ENCODE measurements at regions of chr15 and their contacts with region 1.

Region 1: DNA sequence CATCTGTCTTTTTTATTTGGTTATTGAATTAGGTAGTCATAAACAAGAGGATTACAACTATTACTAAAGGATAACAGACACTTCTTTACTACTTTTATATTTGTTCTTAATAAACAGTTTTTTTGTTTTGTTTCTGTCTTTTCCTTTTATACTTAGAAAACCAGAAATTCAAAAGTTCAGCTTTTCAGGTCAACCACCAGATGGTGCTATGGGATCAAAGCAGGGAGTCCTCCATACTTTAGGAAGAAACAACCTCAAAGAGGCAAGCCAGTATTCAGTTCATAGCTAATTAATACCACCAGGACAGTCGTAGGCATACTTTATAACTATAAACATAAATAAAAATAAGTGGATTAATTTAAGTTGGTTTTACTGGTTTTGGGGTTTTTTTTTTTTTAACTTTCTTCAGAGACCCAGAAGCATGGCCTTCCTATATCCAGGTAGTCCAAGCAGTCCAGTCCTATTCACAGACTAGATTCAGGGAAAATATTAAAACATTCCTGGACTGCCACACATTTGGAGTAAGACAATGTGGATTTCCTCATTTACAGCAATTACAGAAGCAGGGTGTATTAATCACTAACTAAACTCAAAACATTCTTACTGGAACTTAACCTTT is 16.0 kb upstream of the EID1 start:
- DNase-seq: peak; percentile 58
- H3K4me3 ChIP-seq: no peak overlapping the region
- H3K27ac ChIP-seq: no peak overlapping the region
- H3K4me1 ChIP-seq: no peaks in the 10 kb centered on the region
- H3K27me3 ChIP-seq: no peaks in the 10 kb centered on the region
- CTCF ChIP-seq: peak; percentile 51 to 57
- POLR2A ChIP-seq: no peak

Region 2: GRCh38 chr15:48352474-48353072 is 509.3 kb before region 1 on chr15:
- CTCF ChIA-PET with region 1: interaction called, 69 read pairs
- POLR2A ChIA-PET with region 1: no interaction called
- dilution Hi-C with region 1: no loop called
- intact Hi-C with region 1: no loop called
- DNase-seq: peak; percentile 67
- H3K4me3 ChIP-seq: no peak overlapping the region
- H3K27ac ChIP-seq: no peak overlapping the region
- H3K4me1 ChIP-seq: no peaks in the 10 kb centered on the region
- H3K27me3 ChIP-seq: no peaks in the 10 kb centered on the region
- CTCF ChIP-seq: peak; percentile 68 to 69
- POLR2A ChIP-seq: no peak

Region 3: DNA sequence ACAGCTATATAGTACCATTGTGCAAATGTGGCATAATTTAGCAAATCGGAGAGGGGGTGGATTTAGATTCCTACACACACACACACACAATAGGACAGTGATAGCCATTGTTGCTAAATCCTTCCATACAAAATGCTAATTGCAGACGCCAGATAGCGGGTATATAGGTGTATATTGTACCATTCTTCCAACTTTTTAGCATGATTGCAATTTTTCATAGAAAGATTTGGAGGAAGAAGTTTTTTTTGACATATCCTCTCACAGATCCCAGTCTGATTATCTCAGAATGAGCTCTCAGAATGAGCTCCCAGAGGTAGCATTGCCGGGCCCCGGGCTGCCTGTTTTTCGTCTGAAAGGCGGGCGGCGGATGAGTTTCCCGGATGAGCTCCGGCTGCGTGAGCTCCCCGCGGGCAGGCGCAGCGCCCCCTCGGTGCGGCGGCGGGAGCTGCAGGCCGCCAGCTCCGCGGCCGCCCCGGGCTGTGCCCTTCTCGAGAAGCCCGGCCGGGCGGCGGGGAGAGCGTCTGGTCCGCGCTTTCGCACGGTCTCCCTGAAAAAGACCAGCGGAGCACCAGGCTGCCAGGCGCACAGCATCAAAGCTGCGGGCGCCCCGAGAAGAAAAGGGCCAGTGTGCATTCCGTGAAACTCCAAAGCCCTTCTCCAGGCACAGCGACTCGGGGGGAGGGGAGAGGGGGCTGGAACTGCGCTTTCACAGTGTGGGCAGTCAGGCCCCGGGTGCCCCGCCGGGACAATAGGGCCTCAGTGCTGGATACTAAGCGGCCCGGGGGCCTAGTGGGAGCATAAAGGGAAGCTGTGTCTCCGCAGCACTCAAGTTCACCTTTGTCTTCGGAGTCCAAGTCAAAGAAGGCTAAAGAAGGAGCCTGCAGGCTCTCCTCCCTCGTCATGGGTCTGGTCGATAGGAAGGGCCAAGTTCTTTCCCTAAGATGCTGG is 113.8 kb after region 1 on chr15:
- CTCF ChIA-PET with region 1: interaction called, 66 read pairs
- POLR2A ChIA-PET with region 1: no interaction called
- dilution Hi-C with region 1: no loop called
- intact Hi-C with region 1: loop called (anchors 1 kb)
- DNase-seq: peak; percentile 79
- H3K4me3 ChIP-seq: peak overlapping the region; percentile 34 to 61 (median 58)
- H3K27ac ChIP-seq: no peak overlapping the region
- H3K4me1 ChIP-seq: peaks cover 8% of the 10 kb centered on the region
- H3K27me3 ChIP-seq: no peaks in the 10 kb centered on the region
- CTCF ChIP-seq: peak; percentile 81 to 98
- POLR2A ChIP-seq: no peak

Region 4: GRCh38 chr15:49155110-49155833 is 293.4 kb after region 1 on chr15 and contains the start of gene COPS2:
- CTCF ChIA-PET with region 1: interaction called, 17 read pairs
- POLR2A ChIA-PET with region 1: no interaction called
- dilution Hi-C with region 1: no loop called
- intact Hi-C with region 1: no loop called
- DNase-seq: peak; percentile 99
- H3K4me3 ChIP-seq: peak within 1 kb of the TSS; percentile 82 to 96 (median 83)
- H3K27ac ChIP-seq: peak within 1 kb of the TSS; percentile 62
- H3K4me1 ChIP-seq: peaks cover 23% of the 10 kb centered on the region
- H3K27me3 ChIP-seq: no peaks in the 10 kb centered on the region
- CTCF ChIP-seq: no peak
- POLR2A ChIP-seq: peak; percentile 60
- total RNA-seq, gene COPS2: 74.9 and 79.3 TPM in 2 replicates

Region 5: GRCh38 chr15:49301562-49301961 is 439.6 kb after region 1 on chr15:
- CTCF ChIA-PET with region 1: no interaction called
- POLR2A ChIA-PET with region 1: no interaction called
- dilution Hi-C with region 1: no loop called
- intact Hi-C with region 1: no loop called
- DNase-seq: no peak
- H3K4me3 ChIP-seq: no peak overlapping the region
- H3K27ac ChIP-seq: no peak overlapping the region
- H3K4me1 ChIP-seq: no peaks in the 10 kb centered on the region
- H3K27me3 ChIP-seq: no peaks in the 10 kb centered on the region
- CTCF ChIP-seq: no peak
- POLR2A ChIP-seq: no peak

Region 6: DNA sequence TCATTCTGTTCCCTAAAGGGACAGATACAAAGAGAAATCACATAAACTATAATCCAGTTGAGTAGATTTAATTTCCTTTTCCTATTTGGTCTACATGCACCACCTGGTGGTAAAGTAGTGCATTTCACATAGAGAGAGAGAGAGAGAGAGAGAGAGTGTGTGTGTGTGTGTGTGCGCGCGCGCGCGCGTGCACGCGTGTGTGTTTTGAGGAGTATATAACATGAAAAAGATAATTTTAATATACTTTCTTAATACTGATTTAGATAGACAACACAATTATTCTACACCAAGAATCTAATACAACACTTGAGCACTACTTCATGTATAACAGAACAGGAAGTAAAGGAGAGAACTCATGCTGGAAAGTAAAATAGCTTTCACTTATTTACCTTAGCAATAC is 560.1 kb after region 1 on chr15:
- CTCF ChIA-PET with region 1: interaction called, 138 read pairs
- POLR2A ChIA-PET with region 1: no interaction called
- dilution Hi-C with region 1: no loop called
- intact Hi-C with region 1: loop called (anchors 1 kb)
- DNase-seq: peak; percentile 65
- H3K4me3 ChIP-seq: peak overlapping the region in 1 of 3 experiments; percentile 9
- H3K27ac ChIP-seq: no peak overlapping the region
- H3K4me1 ChIP-seq: peaks cover 2% of the 10 kb centered on the region
- H3K27me3 ChIP-seq: peaks cover 0 to 3% of the 10 kb centered on the region in 2 experiments
- CTCF ChIP-seq: peak; percentile 58 to 78
- POLR2A ChIP-seq: no peak

Region 7: DNA sequence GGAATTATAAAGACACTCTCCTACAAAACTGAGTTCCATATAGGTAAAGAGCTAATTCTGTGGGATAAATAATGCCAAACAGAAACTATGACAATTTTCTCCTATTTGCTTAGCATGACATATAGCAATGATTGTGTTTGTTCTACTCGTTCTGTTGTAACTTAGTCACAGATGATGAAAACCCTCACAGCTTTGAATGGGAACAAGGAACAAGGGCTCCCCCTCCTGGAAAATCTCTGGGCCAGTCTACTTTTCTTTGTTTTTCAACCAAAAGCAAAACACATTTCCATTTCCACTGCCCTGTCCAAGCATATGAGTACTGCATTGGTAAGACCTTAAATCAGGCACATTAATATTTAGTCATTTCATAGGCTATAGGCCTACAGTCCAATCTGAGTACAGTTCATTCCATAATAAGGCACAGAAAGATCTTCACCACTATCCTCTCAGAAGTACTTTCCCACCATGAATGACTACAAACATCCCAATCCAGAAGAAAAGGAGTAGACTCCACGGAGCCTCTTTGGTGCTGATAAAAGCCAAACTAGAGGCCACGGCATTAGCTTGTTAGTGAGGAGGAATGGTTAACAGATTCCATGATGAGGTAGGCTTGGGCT is 1190.0 kb after region 1 on chr15:
- CTCF ChIA-PET with region 1: interaction called, 17 read pairs
- POLR2A ChIA-PET with region 1: no interaction called
- dilution Hi-C with region 1: no loop called
- intact Hi-C with region 1: no loop called
- DNase-seq: peak; percentile 50
- H3K4me3 ChIP-seq: no peak overlapping the region
- H3K27ac ChIP-seq: no peak overlapping the region
- H3K4me1 ChIP-seq: no peaks in the 10 kb centered on the region
- H3K27me3 ChIP-seq: peaks cover 7 to 9% of the 10 kb centered on the region in 2 experiments
- CTCF ChIP-seq: peak; percentile 34 to 58
- POLR2A ChIP-seq: no peak

Measured in endothelial cell of umbilical vein (primary cell).